ENCODE measurements at regions of chr12 and their contacts with region 1.

Region 1: DNA sequence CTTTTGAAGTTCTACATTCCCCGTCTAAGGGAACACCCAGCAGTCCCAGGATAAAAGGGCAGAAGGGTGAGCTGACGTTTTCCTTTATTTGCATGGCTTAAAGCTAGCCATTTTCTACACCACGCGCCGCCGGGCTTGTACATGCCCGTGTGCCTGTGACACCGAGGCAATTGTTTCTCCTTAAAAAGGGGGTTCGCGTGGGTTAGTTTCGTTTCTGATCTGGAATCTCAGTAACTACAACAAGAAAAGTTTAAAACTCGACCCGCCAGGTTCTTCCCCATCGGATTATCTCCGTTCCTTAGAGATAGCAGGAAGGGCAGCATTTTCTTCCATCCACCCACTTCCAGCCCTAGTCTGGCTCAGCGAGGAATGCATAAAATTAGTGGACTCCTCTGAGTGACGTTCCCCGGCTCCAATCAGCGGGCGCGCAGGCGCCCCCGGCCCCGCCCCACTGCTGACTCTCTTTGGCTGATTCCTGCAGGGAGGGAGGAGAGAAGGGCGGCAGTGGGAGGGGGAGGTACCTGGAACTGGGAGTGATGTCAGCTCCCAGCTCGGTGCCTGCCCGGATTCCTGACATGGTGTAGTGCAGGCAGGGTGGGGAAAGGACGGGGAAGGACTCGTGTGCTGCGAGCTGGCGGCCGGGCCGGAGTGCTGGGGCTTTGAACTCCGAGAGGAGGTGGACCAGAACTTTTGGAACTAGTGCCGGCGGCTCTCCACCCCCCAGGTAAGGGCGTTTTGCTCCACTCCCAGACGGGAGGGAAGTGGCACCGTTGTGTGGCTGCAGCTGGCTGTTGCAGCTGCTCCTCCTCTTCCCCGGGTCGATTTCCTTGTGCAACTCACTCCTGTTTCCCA is at the start of gene PPFIBP1:
- DNase-seq: peak; percentile 96 to 100 (median 100)

Region 2: DNA sequence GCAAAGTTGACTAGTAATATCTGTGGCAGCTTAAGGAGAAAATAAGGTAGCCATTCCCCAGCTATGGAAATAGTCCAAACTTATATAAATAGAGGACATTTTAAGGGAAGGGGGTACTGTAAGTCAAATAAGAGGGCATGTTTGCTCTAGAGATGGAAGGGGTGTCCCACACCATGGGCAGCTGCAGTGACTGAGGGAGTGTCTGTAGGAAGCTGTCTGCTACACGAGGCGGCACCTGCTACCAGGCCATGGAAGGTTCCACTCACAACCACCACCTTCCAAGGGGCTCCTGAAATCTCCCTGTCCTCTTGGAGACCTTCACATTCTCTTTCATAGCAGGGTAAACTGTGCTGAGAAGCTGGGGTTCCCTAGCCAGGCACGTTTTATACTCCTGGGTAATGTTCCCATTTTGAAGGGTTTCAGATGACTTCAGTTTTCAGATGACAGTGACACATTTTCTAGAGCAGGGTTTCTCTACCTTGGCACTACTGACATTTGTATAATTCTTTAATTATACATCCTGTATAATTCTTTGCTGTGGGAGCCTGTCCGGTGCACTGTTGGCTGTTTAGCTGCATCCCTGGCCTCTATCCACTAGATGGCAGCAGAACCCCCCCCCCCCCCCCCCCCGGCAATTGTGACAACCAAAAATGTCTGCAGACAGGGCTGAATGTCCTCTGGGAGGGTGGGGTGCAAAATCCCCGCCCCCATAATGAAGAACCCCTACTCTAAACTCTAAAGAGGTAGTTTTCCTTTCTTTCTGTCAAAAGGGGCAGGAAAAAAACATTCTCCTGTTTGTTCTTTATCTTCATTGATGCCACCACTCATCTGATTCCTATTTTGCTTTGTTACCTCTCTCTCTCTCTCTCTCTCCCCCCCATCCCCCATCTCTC is 88.9 kb before region 1 on chr12:
- intact Hi-C with region 1: loop called (anchors 10 kb)
- DNase-seq: peak in 16 of 42 donors; percentile 3 to 63 (median 24)

Region 3: DNA sequence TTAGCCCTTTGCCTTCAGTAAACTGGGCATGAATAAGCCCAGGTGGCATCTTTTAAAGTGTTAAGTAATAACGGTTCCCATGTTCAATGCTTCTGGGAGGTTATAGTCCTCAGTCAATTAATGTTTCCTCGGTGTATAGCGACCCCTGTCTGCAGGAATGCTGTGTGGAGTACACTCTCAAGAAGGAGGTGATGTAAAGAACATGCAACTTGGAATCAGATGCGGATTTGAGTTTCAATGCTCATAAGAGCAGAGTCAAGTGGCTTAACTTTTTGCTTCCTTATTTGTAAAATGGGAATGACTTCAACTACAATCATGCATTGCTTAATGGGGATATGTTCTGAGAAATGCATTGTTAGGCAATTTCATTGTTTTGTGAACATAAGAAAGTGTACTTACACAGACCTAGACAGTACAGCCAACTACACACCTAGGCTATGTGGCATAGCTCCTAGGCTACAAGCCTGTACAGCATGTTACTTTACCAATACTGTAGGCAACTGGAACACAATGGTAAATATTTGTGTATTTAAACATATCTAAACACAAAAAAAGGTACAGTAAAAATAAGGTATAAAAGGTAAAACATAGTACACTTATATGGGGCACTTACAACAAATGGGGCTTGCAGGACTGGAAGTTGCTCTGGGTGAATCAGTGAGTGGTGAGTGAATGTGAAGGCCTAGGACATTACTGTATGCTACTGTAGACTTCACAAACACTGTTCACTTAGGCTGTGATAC is 180.0 kb after region 1 on chr12:
- intact Hi-C with region 1: loop called (anchors 10 kb)
- DNase-seq: peak in 39 of 42 donors; percentile 22 to 89 (median 71)

Measured in head of caudate nucleus (tissue), 42 donors.